Left cardiac atrium (tissue), 4 donors: ENCODE measurements at regions of chr9 and their contacts with region 1.

Region 1: DNA sequence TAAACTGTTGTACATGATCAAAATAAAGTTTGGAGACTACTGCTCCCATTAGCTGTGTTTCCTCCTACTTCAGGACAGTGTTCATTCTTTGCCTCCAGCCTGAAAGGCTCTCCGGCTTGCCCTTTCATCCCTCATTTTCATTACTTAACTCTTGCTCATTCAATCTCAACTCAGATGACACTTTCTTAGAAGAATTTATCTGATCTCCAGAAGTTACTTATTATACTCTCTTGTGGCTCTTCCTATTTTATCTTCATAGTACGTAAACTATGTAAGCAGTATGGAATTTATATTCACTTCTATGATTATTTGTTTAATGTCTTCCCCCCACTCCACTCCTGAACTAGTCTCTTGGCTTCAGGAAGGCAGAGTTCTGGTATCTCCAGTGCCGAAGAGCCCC is 1737.9 kb upstream of the C9orf72 start:
- DNase-seq: no peak
- ATAC-seq: no peak

Region 2: DNA sequence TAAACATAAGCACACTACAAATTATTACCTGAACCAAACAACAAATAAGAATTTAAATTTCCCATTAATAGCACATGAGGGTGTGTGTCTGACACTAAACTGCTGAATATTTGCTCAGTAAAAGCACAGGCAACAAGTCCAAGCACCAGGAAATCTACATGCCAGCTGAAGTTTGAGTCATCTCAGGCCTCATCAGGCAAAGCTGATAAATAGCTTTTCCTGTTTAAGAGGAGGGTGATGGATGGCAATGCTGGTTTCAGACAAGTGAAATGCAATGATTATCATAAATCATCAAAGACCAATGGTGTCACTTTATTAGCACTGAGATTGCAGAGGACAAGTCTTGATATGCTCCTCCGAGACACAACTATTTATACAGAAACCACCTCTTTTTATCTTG is 69.9 kb before region 1 on chr9:
- intact Hi-C with region 1: loop called in 1 of 2 experiments (anchors 10 kb)
- DNase-seq: no peak
- ATAC-seq: no peak